ENCODE measurements at regions of chr12 and their contacts with region 1.

Region 1: GRCh38 chr12:108633534-108634248 is at the start of gene SELPLG:
- H3K4me3 Mint-ChIP-seq: peak within 1 kb of the TSS; percentile 89
- H3K27ac Mint-ChIP-seq: peak within 1 kb of the TSS; percentile 95
- H3K4me1 Mint-ChIP-seq: peaks cover 81% of the 10 kb centered on the region
- H3K27me3 Mint-ChIP-seq: no peaks in the 10 kb centered on the region

Region 2: DNA sequence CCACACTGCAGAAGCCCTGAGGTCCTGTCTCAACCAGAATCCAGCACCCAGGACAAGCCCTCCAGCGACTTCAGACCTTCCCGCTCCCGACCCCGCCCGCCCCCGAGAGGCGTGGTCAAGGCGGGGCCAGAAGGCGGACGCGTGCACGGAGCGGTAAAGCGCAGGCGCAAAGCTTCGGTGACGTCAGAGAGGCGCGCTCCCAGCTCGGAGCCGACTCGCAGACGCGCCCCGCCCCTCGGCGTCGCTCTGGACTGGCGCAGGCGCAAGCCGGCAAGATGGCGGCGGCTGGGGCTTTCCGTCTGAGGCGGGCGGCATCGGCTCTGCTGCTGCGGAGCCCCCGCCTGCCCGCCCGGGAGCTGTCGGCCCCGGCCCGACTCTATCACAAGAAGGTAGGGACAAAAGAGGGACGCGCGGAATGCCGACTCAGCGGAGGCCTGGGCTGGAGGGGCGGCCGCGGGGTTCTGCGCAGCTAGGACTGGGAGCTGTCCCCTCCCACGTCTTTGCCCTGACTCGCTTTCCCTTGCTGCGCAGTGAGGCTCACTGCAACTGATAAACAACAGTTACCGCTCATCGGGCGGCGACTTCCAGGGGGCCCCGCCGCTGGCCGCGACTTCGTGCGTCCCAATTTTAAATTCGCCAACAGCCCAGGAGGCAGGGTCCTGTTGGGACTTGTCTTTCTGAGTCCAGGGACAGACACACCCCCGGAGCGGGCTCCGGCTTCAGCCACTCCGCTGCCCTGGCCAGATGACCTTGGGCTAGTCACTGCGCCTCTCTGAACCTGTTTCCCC is 71.1 kb before region 1 on chr12 and contains the start of gene ISCU:
- intact Hi-C with region 1: loop called (anchors 5 kb)
- H3K4me3 Mint-ChIP-seq: peak within 1 kb of the TSS; percentile 100
- H3K27ac Mint-ChIP-seq: peak within 1 kb of the TSS; percentile 94
- H3K4me1 Mint-ChIP-seq: peaks cover 59% of the 10 kb centered on the region
- H3K27me3 Mint-ChIP-seq: no peaks in the 10 kb centered on the region

Region 3: GRCh38 chr12:108618079-108618952 is 15.4 kb before region 1 on chr12:
- intact Hi-C with region 1: loop called (anchors 2 kb)
- H3K4me3 Mint-ChIP-seq: no peak overlapping the region
- H3K27ac Mint-ChIP-seq: peak overlapping the region; percentile 53
- H3K4me1 Mint-ChIP-seq: peaks cover 83% of the 10 kb centered on the region
- H3K27me3 Mint-ChIP-seq: no peaks in the 10 kb centered on the region

Region 4: GRCh38 chr12:108643941-108644810 is 10.5 kb after region 1 on chr12:
- intact Hi-C with region 1: loop called (anchors 2 kb)
- H3K4me3 Mint-ChIP-seq: peak overlapping the region; percentile 37
- H3K27ac Mint-ChIP-seq: peak overlapping the region; percentile 98
- H3K4me1 Mint-ChIP-seq: peaks cover 87% of the 10 kb centered on the region
- H3K27me3 Mint-ChIP-seq: no peaks in the 10 kb centered on the region

Region 5: GRCh38 chr12:108664338-108665258 is 30.9 kb after region 1 on chr12:
- intact Hi-C with region 1: loop called (anchors 2 kb)
- H3K4me3 Mint-ChIP-seq: peak overlapping the region; percentile 23
- H3K27ac Mint-ChIP-seq: peak overlapping the region; percentile 82
- H3K4me1 Mint-ChIP-seq: peaks cover 51% of the 10 kb centered on the region
- H3K27me3 Mint-ChIP-seq: no peaks in the 10 kb centered on the region